ENCODE measurements at regions of chr1 and their contacts with region 1.

Region 1: DNA sequence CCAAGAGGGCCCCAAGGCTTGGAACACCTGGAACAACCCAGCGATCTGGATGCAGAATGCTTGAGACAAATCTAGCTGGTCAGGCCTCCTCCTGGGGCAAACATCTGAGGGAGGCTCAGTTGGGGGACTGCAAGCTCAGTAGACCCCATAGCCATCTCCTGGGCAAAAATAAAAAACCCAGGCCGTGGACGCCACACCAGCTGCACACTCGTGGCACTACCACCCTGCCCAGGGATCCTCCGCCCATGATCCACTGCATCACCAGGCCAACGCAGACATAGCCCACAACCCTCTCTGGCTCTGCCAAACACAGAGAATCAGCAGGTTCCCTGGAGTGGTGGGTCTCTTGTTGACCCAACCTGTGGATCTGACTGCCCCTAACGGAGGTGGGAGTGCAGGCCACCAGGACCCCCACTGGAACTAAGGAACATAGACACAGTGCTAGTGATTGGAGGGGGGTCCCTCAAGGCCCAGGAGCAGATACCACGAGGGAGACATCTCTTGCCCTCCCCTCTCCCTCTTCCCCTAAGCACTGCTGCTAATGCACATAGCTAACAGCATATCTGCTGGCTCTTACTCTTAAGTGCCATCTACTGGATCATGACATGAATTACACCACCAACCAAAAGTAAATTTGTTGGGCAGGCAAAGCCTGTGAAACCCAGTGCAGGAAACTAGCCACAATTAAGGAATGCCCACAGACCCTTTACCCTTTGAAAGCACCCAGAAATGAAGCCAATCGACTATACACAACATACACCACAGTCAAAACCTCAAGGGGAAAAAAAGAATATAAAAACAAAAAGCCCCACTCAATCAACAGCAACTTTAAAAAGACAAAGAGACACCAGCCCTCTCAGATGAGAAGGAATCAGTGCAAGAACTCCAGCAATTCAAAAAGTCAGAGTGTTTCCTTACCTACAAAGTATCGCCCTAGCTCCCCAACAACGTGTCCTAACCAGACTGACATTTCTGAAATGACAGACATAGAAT is 147.3 kb downstream of the CHD1L start:
- DNase-seq: no peak
- H3K4me3 ChIP-seq: no peak overlapping the region
- H3K27ac ChIP-seq: no peak overlapping the region
- H3K4me1 ChIP-seq: no peaks in the 10 kb centered on the region
- H3K27me3 ChIP-seq: peaks cover 0 to 14% (median 0%) of the 10 kb centered on the region in 4 donors
- CTCF ChIP-seq: peak; percentile 34 to 63 (median 47)
- POLR2A ChIP-seq: no peak

Region 2: DNA sequence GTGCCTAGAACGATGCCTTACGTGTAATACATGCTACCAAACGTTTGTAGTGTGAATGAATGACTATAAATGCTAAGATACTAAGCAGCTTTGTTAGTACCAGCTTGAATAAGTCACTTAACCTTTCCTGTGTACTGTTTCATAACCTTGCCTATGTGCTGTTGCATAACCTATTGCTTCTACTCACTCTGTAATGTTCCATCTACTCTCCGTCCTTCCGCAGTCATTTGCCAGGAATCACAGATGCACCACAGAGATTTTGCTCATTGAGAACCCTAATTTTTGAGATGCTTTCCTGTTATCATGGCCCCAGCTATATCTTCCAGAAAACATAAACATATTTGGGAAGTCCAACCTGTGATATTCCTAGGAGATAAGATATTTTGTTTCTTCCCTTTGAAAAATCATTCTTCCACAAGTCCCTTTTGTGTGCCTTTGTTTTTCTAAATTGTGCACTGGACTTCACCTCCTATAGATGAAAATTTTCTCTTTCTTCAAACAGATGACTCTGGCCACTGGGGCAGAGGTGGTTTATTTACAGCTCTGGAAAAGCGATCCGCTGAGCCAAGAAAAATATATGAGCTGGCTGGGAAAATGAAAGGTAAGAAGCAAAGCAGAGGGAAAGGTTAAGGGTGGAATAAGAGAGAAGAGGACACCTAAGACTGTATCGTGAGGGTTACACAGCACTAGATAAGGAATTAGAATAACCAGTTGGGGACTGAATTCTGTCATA is 102.5 kb before region 1 on chr1:
- intact Hi-C with region 1: loop called (anchors 10 kb)
- DNase-seq: no peak
- H3K4me3 ChIP-seq: no peak overlapping the region
- H3K27ac ChIP-seq: no peak overlapping the region
- H3K4me1 ChIP-seq: no peaks in the 10 kb centered on the region
- H3K27me3 ChIP-seq: no peaks in the 10 kb centered on the region
- CTCF ChIP-seq: no peak
- POLR2A ChIP-seq: no peak